Activated naive CD4-positive, alpha-beta T cell treated with anti-CD3 and anti-CD28 coated beads for 36 hours (primary cell): ENCODE measurements at regions of chr11 and their contacts with region 1.

Region 1: DNA sequence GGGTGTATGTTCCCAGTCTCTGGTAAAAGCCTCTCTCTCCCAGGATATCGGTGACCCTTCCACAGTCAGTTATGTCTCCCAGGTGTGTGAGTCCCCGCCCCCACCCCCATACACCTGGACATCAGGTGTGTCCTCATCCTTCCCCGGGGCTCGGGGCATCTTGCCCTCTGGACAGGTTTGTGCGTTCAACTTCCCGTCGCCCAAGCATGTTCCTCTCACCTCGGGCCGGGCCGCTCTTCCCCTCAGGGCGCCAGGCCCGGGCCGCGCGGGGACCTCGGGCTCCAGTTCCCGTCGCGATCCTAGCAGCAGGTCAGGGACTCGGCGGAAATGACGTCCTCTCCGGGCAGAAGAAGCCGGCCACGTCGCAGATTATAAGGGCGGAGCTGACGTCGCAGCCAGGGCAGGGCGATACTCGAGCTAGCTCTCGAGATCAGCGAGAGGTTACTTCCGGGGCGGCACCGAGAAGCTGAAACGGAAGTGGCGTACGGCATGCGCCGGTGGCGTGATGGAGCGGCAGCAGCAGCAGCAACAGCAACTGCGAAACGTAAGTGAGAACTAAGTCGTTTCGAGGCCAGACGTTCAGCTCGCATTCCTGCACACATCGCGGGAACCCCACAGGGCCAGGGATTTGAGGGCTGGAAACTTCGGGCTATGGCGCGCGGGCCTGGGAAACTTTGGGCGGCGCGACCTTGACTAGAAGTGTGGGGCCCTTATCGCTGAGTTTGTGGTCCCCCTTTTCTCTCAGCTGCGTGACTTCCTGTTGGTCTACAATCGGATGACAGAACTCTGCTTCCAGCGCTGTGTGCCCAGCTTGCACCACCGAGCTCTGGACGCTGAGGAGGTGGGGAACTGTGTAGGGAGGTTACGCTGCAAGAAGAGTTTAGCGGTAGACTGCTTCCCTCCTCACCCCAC is at the starts of genes ARFIP2 and TIMM10B:
- DNase-seq: peak; percentile 99
- H3K4me3 Mint-ChIP-seq: peak within 1 kb of the TSS; percentile 94
- H3K27ac Mint-ChIP-seq: peak within 1 kb of the TSS; percentile 96
- H3K4me1 Mint-ChIP-seq: peaks cover 38% of the 10 kb centered on the region
- H3K27me3 Mint-ChIP-seq: no peaks in the 10 kb centered on the region
- total RNA-seq, gene ARFIP2: 33.5 to 37.9 TPM
- total RNA-seq, gene TIMM10B: 35.1 to 41.7 TPM

Region 2: DNA sequence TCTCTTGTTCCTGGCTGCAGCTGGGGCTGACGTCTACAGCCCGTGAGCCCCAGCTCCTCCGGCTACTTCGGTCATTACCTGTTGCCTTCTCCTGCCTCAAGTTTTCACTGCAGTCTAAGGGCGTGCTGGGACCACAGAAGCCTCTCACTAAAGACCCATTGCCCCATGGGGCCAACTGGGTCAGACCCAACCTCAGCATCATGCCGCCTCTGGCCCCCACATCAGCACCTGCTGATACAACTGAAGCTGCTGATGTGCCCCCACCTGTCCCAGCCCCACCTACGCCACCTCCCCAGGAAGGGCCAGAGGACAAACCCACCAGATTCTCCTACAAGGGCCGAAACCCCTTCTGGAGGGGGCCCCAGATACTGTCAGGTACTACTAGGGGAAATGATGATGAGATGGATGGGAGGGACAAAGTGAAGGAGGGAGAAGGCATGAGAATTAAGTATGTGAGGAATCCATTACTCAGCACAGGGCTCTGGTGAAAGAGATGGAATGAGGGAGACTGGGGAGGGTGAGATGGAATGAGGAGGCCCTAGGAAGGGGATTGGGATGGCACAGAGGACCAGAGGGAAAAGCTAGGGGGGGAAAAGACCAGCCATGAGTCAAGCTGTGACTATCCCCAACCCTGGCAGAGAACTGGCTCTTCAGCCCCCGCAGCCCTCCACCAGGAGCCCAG is 270.9 kb before region 1 on chr11:
- CTCF ChIA-PET with region 1: no interaction called
- intact Hi-C with region 1: no loop called
- DNase-seq: no peak
- H3K4me3 Mint-ChIP-seq: no peak overlapping the region
- H3K27ac Mint-ChIP-seq: no peak overlapping the region
- H3K4me1 Mint-ChIP-seq: no peaks in the 10 kb centered on the region
- H3K27me3 Mint-ChIP-seq: no peaks in the 10 kb centered on the region

Region 3: DNA sequence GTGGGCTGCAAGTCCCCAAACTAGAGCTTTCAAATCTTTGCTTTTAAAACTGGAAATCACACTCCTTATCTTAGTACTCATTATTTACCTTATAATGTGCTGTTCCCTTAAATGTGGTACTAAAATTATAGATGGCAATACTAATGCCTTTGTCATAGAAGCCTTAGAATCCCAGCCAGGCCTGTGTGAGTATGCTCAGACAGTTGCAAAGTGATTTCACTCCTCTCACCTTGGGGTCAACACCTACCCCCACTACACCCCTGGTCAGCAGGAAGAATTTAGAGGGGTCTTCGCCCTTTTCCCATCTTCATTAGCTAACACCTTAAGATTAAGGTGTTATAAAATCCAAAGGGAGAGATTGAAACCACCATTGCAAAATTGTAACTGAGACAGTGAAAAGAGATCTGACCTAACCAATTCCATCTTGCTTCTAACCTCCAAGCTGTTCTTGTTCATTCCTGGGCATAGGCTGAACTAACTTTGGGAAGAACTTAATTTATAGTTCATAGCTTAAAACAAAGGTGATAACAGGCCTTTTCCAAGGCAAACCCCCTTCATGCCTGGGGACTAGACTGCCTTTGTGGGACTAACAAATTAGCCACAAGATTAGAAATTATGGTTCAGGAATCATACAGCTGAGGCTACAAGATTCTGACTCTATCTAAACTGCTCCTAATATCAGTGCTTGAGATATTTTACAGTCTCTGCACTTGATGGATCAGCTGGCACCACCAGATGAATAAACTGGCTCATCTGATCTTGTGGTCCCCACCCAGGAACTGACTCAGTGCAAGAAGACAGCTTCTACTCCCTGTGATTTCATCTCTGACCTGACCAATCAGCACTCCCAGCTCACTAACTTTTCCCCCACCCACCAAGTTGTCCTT is 212.3 kb after region 1 on chr11:
- CTCF ChIA-PET with region 1: no interaction called
- intact Hi-C with region 1: loop called (anchors 2 kb)
- DNase-seq: peak; percentile 84
- H3K4me3 Mint-ChIP-seq: no peak overlapping the region
- H3K27ac Mint-ChIP-seq: peak overlapping the region; percentile 37
- H3K4me1 Mint-ChIP-seq: peaks cover 38% of the 10 kb centered on the region
- H3K27me3 Mint-ChIP-seq: no peaks in the 10 kb centered on the region